ENCODE measurements at regions of chr2 and their contacts with region 1.

Region 1: DNA sequence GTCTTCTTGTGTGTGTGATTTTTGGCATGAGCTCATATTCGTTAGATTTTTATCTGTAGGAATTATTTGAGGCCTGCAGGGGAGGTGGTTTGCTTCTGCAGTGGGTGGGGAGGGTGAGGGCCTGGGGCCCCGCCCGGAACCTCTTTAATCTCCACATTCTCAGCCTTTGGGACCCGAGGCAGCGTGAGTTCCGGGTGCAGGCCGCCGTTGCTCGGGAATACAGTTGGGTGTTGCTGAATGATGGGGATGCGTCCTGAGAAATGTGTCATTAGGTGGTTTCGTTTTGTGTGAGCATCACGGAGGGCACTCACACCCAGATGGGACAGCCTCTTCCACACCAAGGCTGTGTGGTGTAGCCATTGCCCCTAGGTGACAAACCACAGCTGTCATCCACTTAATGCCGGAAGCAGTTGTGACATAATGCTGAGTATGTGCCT is 13.7 kb upstream of the GAL3ST2 start:
- DNase-seq: peak; percentile 44 to 95 (median 71)
- ATAC-seq: peak; percentile 77
- H3K4me3 ChIP-seq: peak overlapping the region in 1 of 2 experiments; percentile 33
- H3K4me3 Mint-ChIP-seq: peak overlapping the region; percentile 68
- H3K27ac ChIP-seq: peak overlapping the region; percentile 66 to 75
- H3K27ac Mint-ChIP-seq: peak overlapping the region; percentile 96
- H3K4me1 ChIP-seq: peaks cover 15% of the 10 kb centered on the region
- H3K4me1 Mint-ChIP-seq: peaks cover 27% of the 10 kb centered on the region
- H3K27me3 ChIP-seq: no peaks in the 10 kb centered on the region
- H3K27me3 Mint-ChIP-seq: no peaks in the 10 kb centered on the region
- CTCF ChIP-seq: no peak

Region 2: GRCh38 chr2:241432824-241433448 is 330.0 kb before region 1 on chr2:
- CTCF ChIA-PET with region 1: no interaction called
- POLR2A ChIA-PET with region 1: no interaction called
- intact Hi-C with region 1: no loop called
- DNase-seq: no peak
- ATAC-seq: no peak
- H3K4me3 ChIP-seq: no peak overlapping the region
- H3K4me3 Mint-ChIP-seq: no peak overlapping the region
- H3K27ac ChIP-seq: no peak overlapping the region
- H3K27ac Mint-ChIP-seq: no peak overlapping the region
- H3K4me1 ChIP-seq: no peaks in the 10 kb centered on the region
- H3K4me1 Mint-ChIP-seq: no peaks in the 10 kb centered on the region
- H3K27me3 ChIP-seq: no peaks in the 10 kb centered on the region
- H3K27me3 Mint-ChIP-seq: peaks cover under 1% of the 10 kb centered on the region
- CTCF ChIP-seq: no peak

Region 3: GRCh38 chr2:241741016-241741415 is 21.9 kb before region 1 on chr2:
- CTCF ChIA-PET with region 1: no interaction called
- POLR2A ChIA-PET with region 1: interaction called, 6 read pairs
- intact Hi-C with region 1: loop called in 1 of 2 experiments (anchors 2 kb)
- DNase-seq: peak in 6 of 9 experiments; percentile 12 to 71 (median 55)
- ATAC-seq: peak; percentile 78
- H3K4me3 ChIP-seq: no peak overlapping the region
- H3K4me3 Mint-ChIP-seq: peak overlapping the region; percentile 61
- H3K27ac ChIP-seq: no peak overlapping the region
- H3K27ac Mint-ChIP-seq: peak overlapping the region; percentile 72
- H3K4me1 ChIP-seq: peaks cover 25% of the 10 kb centered on the region
- H3K4me1 Mint-ChIP-seq: peaks cover 30% of the 10 kb centered on the region
- H3K27me3 ChIP-seq: no peaks in the 10 kb centered on the region
- H3K27me3 Mint-ChIP-seq: no peaks in the 10 kb centered on the region
- CTCF ChIP-seq: no peak

Region 4: GRCh38 chr2:241844066-241844728 is 81.2 kb after region 1 on chr2:
- CTCF ChIA-PET with region 1: no interaction called
- POLR2A ChIA-PET with region 1: interaction called, 4 read pairs
- intact Hi-C with region 1: loop called in 1 of 2 experiments (anchors 2 kb)
- DNase-seq: peak in 8 of 9 experiments; percentile 58 to 88 (median 76)
- ATAC-seq: peak; percentile 75
- H3K4me3 ChIP-seq: peak overlapping the region; percentile 37 to 53
- H3K4me3 Mint-ChIP-seq: peak overlapping the region; percentile 75
- H3K27ac ChIP-seq: peak overlapping the region in 1 of 2 experiments; percentile 23
- H3K27ac Mint-ChIP-seq: no peak overlapping the region
- H3K4me1 ChIP-seq: peaks cover 23% of the 10 kb centered on the region
- H3K4me1 Mint-ChIP-seq: peaks cover 28% of the 10 kb centered on the region
- H3K27me3 ChIP-seq: no peaks in the 10 kb centered on the region
- H3K27me3 Mint-ChIP-seq: peaks cover 2% of the 10 kb centered on the region
- CTCF ChIP-seq: no peak

Region 5: GRCh38 chr2:241865957-241866789 is 103.2 kb after region 1 on chr2:
- CTCF ChIA-PET with region 1: interaction called, 7 read pairs
- POLR2A ChIA-PET with region 1: interaction called, 14 read pairs
- intact Hi-C with region 1: loop called (anchors 2 kb)
- DNase-seq: peak in 3 of 9 experiments; percentile 24 to 50 (median 46)
- ATAC-seq: no peak
- H3K4me3 ChIP-seq: no peak overlapping the region
- H3K4me3 Mint-ChIP-seq: no peak overlapping the region
- H3K27ac ChIP-seq: peak overlapping the region in 1 of 2 experiments; percentile 62
- H3K27ac Mint-ChIP-seq: peak overlapping the region; percentile 46
- H3K4me1 ChIP-seq: peaks cover 81% of the 10 kb centered on the region
- H3K4me1 Mint-ChIP-seq: peaks cover 72% of the 10 kb centered on the region
- H3K27me3 ChIP-seq: peaks cover 0 to 30% of the 10 kb centered on the region in 2 experiments
- H3K27me3 Mint-ChIP-seq: peaks cover 28% of the 10 kb centered on the region
- CTCF ChIP-seq: no peak